ENCODE measurements at regions of chr12 and their contacts with region 1.

Region 1: GRCh38 chr12:57751788-57752667 is at the start of gene CDK4:
- DNase-seq: peak; percentile 99 to 100 (median 99)
- ATAC-seq: peak; percentile 89 to 95 (median 92)
- H3K4me3 ChIP-seq: peak within 1 kb of the TSS; percentile 43 to 89 (median 72)
- H3K27ac ChIP-seq: peak within 1 kb of the TSS; percentile 71 to 96 (median 91)
- H3K4me1 ChIP-seq: peaks cover 0 to 52% (median 33%) of the 10 kb centered on the region in 12 donors
- H3K27me3 ChIP-seq: no peaks in the 10 kb centered on the region
- CTCF ChIP-seq: no peak
- POLR2A ChIP-seq: peak in 1 of 2 donors; percentile 69
- total RNA-seq, gene CDK4: 38.1 to 62.1 (median 50.2) TPM

Region 2: GRCh38 chr12:57693659-57694458 is 58.2 kb before region 1 on chr12 and contains the start of gene OS9:
- intact Hi-C with region 1: loop called in 1 of 10 experiments (anchors 5 kb)
- DNase-seq: peak; percentile 93 to 98 (median 97)
- ATAC-seq: peak; percentile 98 to 99 (median 99)
- H3K4me3 ChIP-seq: peak within 1 kb of the TSS; percentile 43 to 96 (median 88)
- H3K27ac ChIP-seq: peak within 1 kb of the TSS; percentile 22 to 85 (median 76)
- H3K4me1 ChIP-seq: peaks cover 0 to 15% (median 10%) of the 10 kb centered on the region in 12 donors
- H3K27me3 ChIP-seq: peaks cover 0 to 4% (median 0%) of the 10 kb centered on the region in 9 donors
- CTCF ChIP-seq: peak; percentile 64 to 91 (median 76)
- POLR2A ChIP-seq: peak in 1 of 2 donors; percentile 82
- total RNA-seq, gene OS9: 93.4 to 188 (median 130) TPM

Region 3: GRCh38 chr12:57771708-57772428 is 19.8 kb after region 1 on chr12 and contains the start of gene METTL1:
- intact Hi-C with region 1: loop called in 1 of 10 experiments (anchors 1 kb)
- DNase-seq: peak; percentile 93 to 96 (median 95)
- ATAC-seq: peak; percentile 94 to 98 (median 95)
- H3K4me3 ChIP-seq: peak within 1 kb of the TSS; percentile 59 to 94 (median 74)
- H3K27ac ChIP-seq: peak within 1 kb of the TSS; percentile 41 to 95 (median 90)
- H3K4me1 ChIP-seq: peaks cover 0 to 31% (median 17%) of the 10 kb centered on the region in 12 donors
- H3K27me3 ChIP-seq: peaks cover 0 to 7% (median 0%) of the 10 kb centered on the region in 9 donors
- CTCF ChIP-seq: no peak
- POLR2A ChIP-seq: peak in 1 of 2 donors; percentile 49
- total RNA-seq, gene METTL1: 0.95 to 16.6 (median 7.7) TPM

Measured in heart left ventricle (tissue), 16 donors.